Endothelial cell of umbilical vein (primary cell): ENCODE measurements at regions of chr2 and their contacts with region 1.

Region 1: DNA sequence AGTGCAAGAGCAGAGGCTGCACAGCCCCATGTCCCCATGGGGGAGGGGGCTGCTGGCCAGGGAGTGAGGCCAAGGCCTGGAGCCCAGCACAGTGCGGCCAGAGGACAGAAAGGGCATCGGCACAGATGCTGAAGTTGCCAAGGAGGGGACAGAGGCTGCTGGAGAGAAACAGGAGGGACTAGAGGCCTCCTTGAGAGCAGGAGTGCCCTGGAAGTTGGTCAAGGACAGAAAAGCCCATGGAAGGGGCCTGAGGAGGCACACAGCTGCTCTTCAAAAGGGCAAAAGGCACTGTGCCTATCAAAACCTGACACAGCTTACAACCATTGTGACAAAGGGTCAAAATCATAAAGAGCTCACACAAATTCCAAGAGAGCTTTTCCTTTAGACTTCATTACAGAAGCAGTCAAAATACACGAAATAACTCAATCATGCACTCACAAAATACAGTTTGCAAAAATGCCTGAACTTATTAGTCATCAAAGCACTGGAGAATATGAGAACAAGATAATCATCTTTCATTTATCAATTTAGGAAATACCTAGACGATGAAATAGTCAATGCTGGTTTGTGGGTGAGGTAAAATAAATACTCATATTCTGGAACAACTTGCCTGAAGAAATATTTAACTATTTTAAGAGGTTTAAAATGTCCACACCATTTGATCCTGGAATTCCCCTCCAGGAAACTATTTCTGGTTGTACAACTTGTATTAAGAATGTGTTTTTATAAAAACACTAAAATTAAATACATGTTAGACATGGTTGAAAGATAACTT is 79.6 kb downstream of the USP40 start:
- DNase-seq: peak; percentile 90
- H3K4me3 ChIP-seq: no peak overlapping the region
- H3K27ac ChIP-seq: peak overlapping the region; percentile 91
- H3K4me1 ChIP-seq: peaks cover 28% of the 10 kb centered on the region
- H3K27me3 ChIP-seq: no peaks in the 10 kb centered on the region
- CTCF ChIP-seq: no peak
- POLR2A ChIP-seq: peak; percentile 20

Region 2: GRCh38 chr2:233413559-233414272 is 73.2 kb before region 1 on chr2:
- CTCF ChIA-PET with region 1: no interaction called
- POLR2A ChIA-PET with region 1: no interaction called
- dilution Hi-C with region 1: no loop called
- intact Hi-C with region 1: loop called (anchors 2 kb)
- DNase-seq: peak; percentile 80
- H3K4me3 ChIP-seq: no peak overlapping the region
- H3K27ac ChIP-seq: peak overlapping the region; percentile 71
- H3K4me1 ChIP-seq: peaks cover 32% of the 10 kb centered on the region
- H3K27me3 ChIP-seq: no peaks in the 10 kb centered on the region
- CTCF ChIP-seq: no peak
- POLR2A ChIP-seq: no peak

Region 3: GRCh38 chr2:233544200-233544610 is 57.2 kb after region 1 on chr2:
- CTCF ChIA-PET with region 1: no interaction called
- POLR2A ChIA-PET with region 1: no interaction called
- dilution Hi-C with region 1: no loop called
- intact Hi-C with region 1: loop called (anchors 2 kb)
- DNase-seq: peak; percentile 65
- H3K4me3 ChIP-seq: no peak overlapping the region
- H3K27ac ChIP-seq: peak overlapping the region; percentile 28
- H3K4me1 ChIP-seq: no peaks in the 10 kb centered on the region
- H3K27me3 ChIP-seq: no peaks in the 10 kb centered on the region
- CTCF ChIP-seq: no peak
- POLR2A ChIP-seq: no peak

Region 4: GRCh38 chr2:233566141-233566960 is 79.4 kb after region 1 on chr2 and contains the start of gene USP40:
- CTCF ChIA-PET with region 1: no interaction called
- POLR2A ChIA-PET with region 1: no interaction called
- dilution Hi-C with region 1: no loop called
- intact Hi-C with region 1: loop called (anchors 2 kb)
- DNase-seq: peak; percentile 92
- H3K4me3 ChIP-seq: peak within 1 kb of the TSS; percentile 59 to 98 (median 93)
- H3K27ac ChIP-seq: peak within 1 kb of the TSS; percentile 98
- H3K4me1 ChIP-seq: peaks cover 6% of the 10 kb centered on the region
- H3K27me3 ChIP-seq: peaks cover 0 to 2% of the 10 kb centered on the region in 2 experiments
- CTCF ChIP-seq: no peak
- POLR2A ChIP-seq: peak; percentile 98
- total RNA-seq, gene USP40: 32.5 and 36.5 TPM in 2 replicates

Region 5: GRCh38 chr2:233711312-233712008 is 224.5 kb after region 1 on chr2:
- CTCF ChIA-PET with region 1: interaction called, 10 read pairs
- POLR2A ChIA-PET with region 1: no interaction called
- dilution Hi-C with region 1: no loop called
- intact Hi-C with region 1: loop called (anchors 1 kb)
- DNase-seq: peak; percentile 66
- H3K4me3 ChIP-seq: no peak overlapping the region
- H3K27ac ChIP-seq: no peak overlapping the region
- H3K4me1 ChIP-seq: peaks cover 2% of the 10 kb centered on the region
- H3K27me3 ChIP-seq: peaks cover 0 to 2% of the 10 kb centered on the region in 2 experiments
- CTCF ChIP-seq: peak; percentile 89 to 90
- POLR2A ChIP-seq: no peak

Region 6: GRCh38 chr2:233854241-233854981 is 367.4 kb after region 1 on chr2 and contains the start of gene HJURP:
- CTCF ChIA-PET with region 1: no interaction called
- POLR2A ChIA-PET with region 1: no interaction called
- dilution Hi-C with region 1: no loop called
- intact Hi-C with region 1: loop called (anchors 5 kb)
- DNase-seq: peak; percentile 98
- H3K4me3 ChIP-seq: peak within 1 kb of the TSS; percentile 88 to 98 (median 89)
- H3K27ac ChIP-seq: peak within 1 kb of the TSS; percentile 73
- H3K4me1 ChIP-seq: peaks cover 20% of the 10 kb centered on the region
- H3K27me3 ChIP-seq: no peaks in the 10 kb centered on the region
- CTCF ChIP-seq: no peak
- POLR2A ChIP-seq: peak; percentile 68
- total RNA-seq, gene HJURP: 42.4 and 60.9 TPM in 2 replicates

Region 7: DNA sequence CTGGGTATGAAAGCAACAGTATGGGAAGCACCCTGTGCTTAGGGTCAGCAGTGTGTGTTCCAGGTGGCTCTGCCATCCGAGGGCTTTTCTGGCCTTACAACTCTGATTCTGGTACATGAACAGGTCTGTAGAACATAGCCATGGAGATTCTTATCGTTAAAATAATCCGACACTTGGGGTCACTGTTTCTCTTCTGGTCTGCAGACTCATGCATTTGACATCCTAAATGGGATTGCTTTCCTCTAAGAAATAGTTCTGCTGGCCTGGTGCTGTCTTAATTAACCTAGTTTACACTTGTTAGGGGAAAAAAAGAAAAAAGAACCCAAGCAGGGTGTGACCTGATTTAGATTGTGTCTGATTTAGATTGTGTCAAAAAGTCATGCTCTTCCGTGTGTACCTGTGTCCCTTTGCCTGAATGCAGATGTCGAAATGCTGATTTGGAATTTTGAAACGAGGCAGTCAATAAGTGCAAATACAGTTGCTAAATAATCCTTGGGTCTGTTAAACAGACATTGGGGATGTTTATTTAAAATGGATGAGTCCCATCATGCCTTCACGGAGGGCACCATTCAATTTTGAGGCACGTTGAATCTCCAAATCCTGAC is 489.8 kb after region 1 on chr2:
- CTCF ChIA-PET with region 1: no interaction called
- POLR2A ChIA-PET with region 1: no interaction called
- dilution Hi-C with region 1: no loop called
- intact Hi-C with region 1: loop called (anchors 5 kb)
- DNase-seq: peak; percentile 57
- H3K4me3 ChIP-seq: no peak overlapping the region
- H3K27ac ChIP-seq: no peak overlapping the region
- H3K4me1 ChIP-seq: peaks cover 13% of the 10 kb centered on the region
- H3K27me3 ChIP-seq: peaks cover 0 to 3% of the 10 kb centered on the region in 2 experiments
- CTCF ChIP-seq: peak; percentile 4 to 22
- POLR2A ChIP-seq: no peak